ENCODE measurements at regions of chr19 and their contacts with region 1.

Region 1: GRCh38 chr19:1837625-1838105 is 10.6 kb downstream of the REXO1 start:
- DNase-seq: peak; percentile 88
- ATAC-seq: peak; percentile 78
- H3K4me3 Mint-ChIP-seq: no peak overlapping the region
- H3K27ac Mint-ChIP-seq: no peak overlapping the region; the same call in 1 of the 2 replicates
- H3K4me1 Mint-ChIP-seq: 0 out of 2 replicates have a peak, but pooled peaks cover 6% of the 10 kb centered on the region
- H3K27me3 Mint-ChIP-seq: no peaks in the 10 kb centered on the region
- CTCF ChIP-seq: peak; percentile 94

Region 2: DNA sequence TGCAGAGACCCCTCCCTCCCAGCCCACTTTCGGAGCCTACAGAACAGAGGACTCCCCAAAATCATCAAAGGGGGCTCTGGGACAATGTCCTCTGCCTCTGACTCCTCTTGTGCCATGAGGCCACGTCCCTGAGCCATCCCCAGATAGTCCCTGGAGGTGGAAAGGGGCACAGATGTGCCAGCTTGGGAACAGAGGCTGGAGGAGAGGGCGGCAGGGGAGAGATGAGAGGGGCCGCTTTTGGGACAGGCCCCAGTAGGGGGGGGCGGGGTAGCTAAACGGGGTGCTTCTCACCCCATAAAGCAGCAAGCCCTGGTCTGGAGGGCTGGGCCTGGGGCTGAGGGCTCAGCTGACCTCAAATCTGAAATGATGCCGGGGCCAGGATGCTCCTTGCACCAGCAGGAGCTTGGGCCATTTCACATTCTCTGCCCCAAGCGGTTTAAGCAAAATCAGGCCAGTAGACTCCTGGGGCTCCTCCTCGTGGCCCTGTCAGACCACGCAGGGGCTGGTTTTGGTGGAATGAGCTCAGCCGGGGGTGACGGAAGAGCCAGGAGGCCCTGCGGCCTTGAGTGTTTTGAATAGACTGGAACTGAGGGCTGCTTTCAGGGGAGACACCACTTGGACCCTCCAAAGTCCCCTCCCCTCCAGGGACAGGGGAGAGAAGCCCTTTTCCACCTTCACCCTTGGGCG is 57.2 kb before region 1 on chr19:
- CTCF ChIA-PET with region 1: interaction called, 11 read pairs
- POLR2A ChIA-PET with region 1: no interaction called
- DNase-seq: no peak
- ATAC-seq: no peak
- H3K4me3 Mint-ChIP-seq: no peak overlapping the region
- H3K27ac Mint-ChIP-seq: no peak overlapping the region
- H3K4me1 Mint-ChIP-seq: peaks cover 16% of the 10 kb centered on the region
- H3K27me3 Mint-ChIP-seq: peaks cover 86% of the 10 kb centered on the region
- CTCF ChIP-seq: no peak

Region 3: GRCh38 chr19:1812469-1813196 is 25.0 kb before region 1 on chr19:
- CTCF ChIA-PET with region 1: interaction called, 11 read pairs
- POLR2A ChIA-PET with region 1: no interaction called
- DNase-seq: peak; percentile 97
- ATAC-seq: peak; percentile 88
- H3K4me3 Mint-ChIP-seq: peak overlapping the region; percentile 87
- H3K27ac Mint-ChIP-seq: peak overlapping the region; percentile 95
- H3K4me1 Mint-ChIP-seq: peaks cover 5% of the 10 kb centered on the region; the same call in 1 of the 2 replicates
- H3K27me3 Mint-ChIP-seq: peaks cover 4% of the 10 kb centered on the region
- CTCF ChIP-seq: peak; percentile 43; the same call in 1 of the 2 replicates

Region 4: GRCh38 chr19:1848399-1849131 is 10.9 kb after region 1 on chr19 and contains the start of gene REXO1:
- CTCF ChIA-PET with region 1: interaction called, 70 read pairs
- POLR2A ChIA-PET with region 1: interaction called, 4 read pairs
- DNase-seq: peak; percentile 99
- ATAC-seq: peak; percentile 46
- H3K4me3 Mint-ChIP-seq: peak within 1 kb of the TSS; percentile 93
- H3K27ac Mint-ChIP-seq: peak within 1 kb of the TSS; percentile 97
- H3K4me1 Mint-ChIP-seq: peaks cover 25% of the 10 kb centered on the region
- H3K27me3 Mint-ChIP-seq: no peaks in the 10 kb centered on the region
- CTCF ChIP-seq: peak; percentile 92
- total RNA-seq, gene REXO1: 48.9 to 61.1 TPM (median 50.1 TPM) in 3 replicates

Region 5: DNA sequence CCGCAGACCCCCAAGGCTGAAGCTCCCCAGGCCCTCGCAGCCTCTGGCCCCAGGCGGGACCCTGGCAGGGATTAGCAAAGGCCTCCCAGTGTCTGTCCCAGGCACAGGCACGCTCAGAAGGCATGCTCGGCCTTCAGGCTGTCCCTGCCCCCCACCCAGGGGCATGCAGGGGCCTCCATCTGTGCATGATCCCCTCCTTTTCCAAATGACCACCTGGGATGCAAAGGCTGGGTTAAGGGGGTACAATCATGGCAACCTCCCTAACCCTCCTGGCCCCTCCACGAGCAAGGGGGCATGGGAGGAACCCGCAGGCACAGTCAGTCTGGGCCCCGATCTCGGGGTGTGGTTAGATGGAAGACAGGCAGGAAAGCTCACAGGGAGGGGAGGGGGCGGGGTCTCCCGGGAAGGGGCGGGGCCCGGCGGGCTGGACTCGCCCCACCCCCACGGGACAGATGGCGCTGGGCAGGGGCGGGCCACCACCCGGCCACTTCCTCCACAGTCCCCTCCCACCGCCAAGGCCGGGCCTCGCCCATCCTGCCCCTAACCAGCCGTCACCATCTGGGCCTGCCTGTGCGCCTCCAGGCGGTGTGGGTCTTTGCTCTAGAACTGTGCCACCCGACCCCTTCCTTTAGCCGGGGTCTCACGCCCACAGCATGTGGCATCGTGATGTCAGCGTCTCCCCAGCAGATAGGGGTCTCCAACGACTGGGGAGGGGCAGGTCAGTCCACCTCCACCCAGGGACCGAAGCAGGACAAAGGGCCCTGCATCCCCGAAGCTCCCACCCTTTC is 17.6 kb after region 1 on chr19:
- CTCF ChIA-PET with region 1: interaction called, 70 read pairs
- POLR2A ChIA-PET with region 1: interaction called, 4 read pairs
- DNase-seq: peak; percentile 93
- ATAC-seq: peak; percentile 80
- H3K4me3 Mint-ChIP-seq: peak overlapping the region; percentile 63
- H3K27ac Mint-ChIP-seq: peak overlapping the region; percentile 91
- H3K4me1 Mint-ChIP-seq: peaks cover 48% of the 10 kb centered on the region
- H3K27me3 Mint-ChIP-seq: no peaks in the 10 kb centered on the region; the same call in 1 of the 2 replicates
- CTCF ChIP-seq: no peak

Region 6: DNA sequence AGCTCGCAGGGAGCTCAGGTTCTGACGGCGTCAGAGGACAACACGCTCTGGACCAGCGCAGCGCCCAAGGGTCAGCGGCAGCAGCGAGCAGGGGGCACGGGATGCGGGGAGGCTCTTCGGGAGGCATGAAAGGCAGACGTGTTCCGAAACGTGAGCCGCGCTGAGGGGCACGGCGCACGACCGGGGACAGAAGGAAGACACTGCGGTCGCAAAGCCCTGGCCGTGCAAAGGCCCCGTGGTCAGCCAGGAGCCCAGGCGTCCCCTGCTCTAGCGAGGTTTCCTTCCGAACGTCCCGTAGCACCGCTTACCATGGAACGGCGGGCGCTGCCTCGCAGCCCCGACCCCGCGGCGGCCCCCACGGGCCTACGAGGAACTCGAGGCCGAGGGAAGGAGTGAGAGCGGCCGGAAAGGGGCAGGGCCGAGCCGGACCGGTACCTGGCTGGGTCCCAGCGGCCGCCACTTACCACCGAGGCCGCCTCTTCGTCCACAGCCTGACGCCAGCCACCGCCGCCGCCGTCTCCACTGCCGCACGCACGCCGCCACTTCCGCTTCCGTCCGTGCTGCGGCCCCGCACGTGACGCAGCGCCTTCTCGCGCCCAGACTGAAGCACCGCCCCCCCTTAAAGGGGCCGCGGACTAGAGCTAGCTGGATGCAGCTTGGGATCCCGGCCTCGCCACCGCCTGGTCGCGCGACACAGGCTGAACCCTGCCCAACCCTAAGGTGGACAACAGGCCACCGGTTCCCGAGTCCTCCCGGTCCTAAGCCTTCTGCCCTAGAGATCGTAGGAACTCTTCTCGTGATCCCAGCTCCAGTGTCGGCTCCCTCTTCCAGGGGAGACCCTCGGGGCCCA is 38.2 kb after region 1 on chr19:
- CTCF ChIA-PET with region 1: interaction called, 14 read pairs
- POLR2A ChIA-PET with region 1: no interaction called
- DNase-seq: peak; percentile 88
- ATAC-seq: peak; percentile 84
- H3K4me3 Mint-ChIP-seq: peak overlapping the region; percentile 99
- H3K27ac Mint-ChIP-seq: peak overlapping the region; percentile 86
- H3K4me1 Mint-ChIP-seq: peaks cover 16% of the 10 kb centered on the region
- H3K27me3 Mint-ChIP-seq: no peaks in the 10 kb centered on the region
- CTCF ChIP-seq: no peak

Region 7: DNA sequence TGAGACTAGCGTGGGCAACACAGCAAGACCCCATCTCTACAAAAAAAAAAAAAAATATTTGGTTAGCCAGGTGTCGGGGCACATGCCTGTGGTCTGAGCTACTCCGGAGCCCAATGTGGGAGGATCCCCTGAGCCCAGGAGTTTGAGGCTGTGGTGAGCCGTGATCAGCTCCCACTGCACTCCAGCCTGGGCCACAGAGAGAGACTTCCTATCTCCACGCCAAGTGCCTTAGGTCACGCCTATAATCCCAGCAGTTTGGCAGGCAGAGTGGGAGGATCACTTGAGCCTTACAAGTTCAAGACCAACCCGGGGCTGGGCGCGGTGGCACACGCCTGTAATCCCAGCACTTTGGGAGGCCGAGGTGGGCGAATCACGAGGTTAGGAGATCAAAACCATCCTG is 58.8 kb after region 1 on chr19:
- CTCF ChIA-PET with region 1: no interaction called
- POLR2A ChIA-PET with region 1: no interaction called
- DNase-seq: no peak
- ATAC-seq: no peak
- H3K4me3 Mint-ChIP-seq: no peak overlapping the region
- H3K27ac Mint-ChIP-seq: no peak overlapping the region
- H3K4me1 Mint-ChIP-seq: peaks cover 7% of the 10 kb centered on the region
- H3K27me3 Mint-ChIP-seq: peaks cover 17% of the 10 kb centered on the region
- CTCF ChIP-seq: no peak

Region 8: GRCh38 chr19:2096480-2097329 is 259.0 kb after region 1 on chr19 and contains the start of gene IZUMO4:
- CTCF ChIA-PET with region 1: no interaction called
- POLR2A ChIA-PET with region 1: interaction called, 10 read pairs
- DNase-seq: peak; percentile 100
- ATAC-seq: peak; percentile 87
- H3K4me3 Mint-ChIP-seq: peak within 1 kb of the TSS; percentile 80
- H3K27ac Mint-ChIP-seq: no peak within 1 kb of the TSS
- H3K4me1 Mint-ChIP-seq: peaks cover 5% of the 10 kb centered on the region; the same call in 1 of the 2 replicates
- H3K27me3 Mint-ChIP-seq: no peaks in the 10 kb centered on the region
- CTCF ChIP-seq: no peak
- total RNA-seq, gene IZUMO4: 0.73 to 1.9 TPM (median 1.8 TPM) in 3 replicates

Measured in WTC11 (cell line).